Aorta (tissue), 5 donors: ENCODE measurements at regions of chr9 and their contacts with region 1.

Region 1: GRCh38 chr9:115157245-115157674 is 39.3 kb upstream of the TNC start:
- DNase-seq: peak in 1 of 2 donors; percentile 54
- ATAC-seq: peak; percentile 64
- H3K4me3 ChIP-seq: no peak overlapping the region
- H3K27ac ChIP-seq: peak overlapping the region; percentile 88 to 90
- H3K4me1 ChIP-seq: peaks cover 4 to 6% of the 10 kb centered on the region in 2 donors
- H3K27me3 ChIP-seq: no peaks in the 10 kb centered on the region

Region 2: DNA sequence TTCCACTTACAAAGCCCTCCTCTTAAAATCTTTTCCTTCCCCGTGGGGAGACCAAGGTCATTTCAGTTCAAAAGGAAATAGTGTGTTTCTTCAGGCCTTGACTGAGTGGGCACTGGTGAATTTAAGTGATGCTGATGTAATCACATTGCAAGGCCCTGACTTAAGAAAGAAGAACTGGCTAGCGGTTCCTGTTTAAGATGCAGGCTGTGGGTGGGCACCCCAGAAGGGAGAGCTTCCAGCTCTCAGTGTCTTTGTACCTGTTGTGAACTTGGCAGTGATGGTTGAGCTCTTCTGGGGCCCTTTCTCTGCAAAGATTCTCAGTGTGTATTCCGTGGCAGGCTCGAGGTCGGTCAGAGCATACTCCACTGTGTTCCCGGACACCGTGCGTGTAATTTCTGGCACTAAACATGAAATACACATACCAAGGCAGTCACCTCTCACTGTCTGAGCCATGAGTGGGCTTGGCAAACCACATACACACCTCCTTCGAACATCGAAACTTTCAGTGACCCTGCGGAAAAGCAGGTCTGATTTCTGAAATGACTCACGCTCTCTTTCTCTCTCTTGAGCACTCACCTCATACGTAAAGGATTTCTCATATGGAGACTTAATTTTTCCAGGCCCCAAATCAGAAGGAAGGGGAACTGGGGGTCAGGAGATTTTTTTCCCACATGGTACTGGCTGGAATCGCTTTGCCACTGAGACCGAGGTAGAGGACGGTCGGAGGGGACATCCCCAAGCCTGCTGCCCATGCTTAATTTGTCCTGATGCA is 121.2 kb before region 1 on chr9:
- intact Hi-C with region 1: loop called in 1 of 2 experiments (anchors 5 kb)
- DNase-seq: peak in 1 of 2 donors; percentile 56
- ATAC-seq: peak; percentile 78
- H3K4me3 ChIP-seq: no peak overlapping the region
- H3K27ac ChIP-seq: peak overlapping the region; percentile 96 to 99
- H3K4me1 ChIP-seq: peaks cover 4 to 8% of the 10 kb centered on the region in 2 donors
- H3K27me3 ChIP-seq: no peaks in the 10 kb centered on the region

Region 3: GRCh38 chr9:115117999-115118878 is 39.0 kb before region 1 on chr9 and contains the start of gene TNC:
- intact Hi-C with region 1: loop called in 1 of 2 experiments (anchors 5 kb)
- DNase-seq: peak; percentile 80 to 89
- ATAC-seq: peak; percentile 79
- H3K4me3 ChIP-seq: peak within 1 kb of the TSS; percentile 9 to 84
- H3K27ac ChIP-seq: peak within 1 kb of the TSS; percentile 52 to 55
- H3K4me1 ChIP-seq: no peaks in the 10 kb centered on the region
- H3K27me3 ChIP-seq: peaks cover 0 to 1% of the 10 kb centered on the region in 2 donors
- total RNA-seq, gene TNC: 117 to 1,047 TPM